H1 (cell line): ENCODE measurements at regions of chr9 and their contacts with region 1.

Region 1: DNA sequence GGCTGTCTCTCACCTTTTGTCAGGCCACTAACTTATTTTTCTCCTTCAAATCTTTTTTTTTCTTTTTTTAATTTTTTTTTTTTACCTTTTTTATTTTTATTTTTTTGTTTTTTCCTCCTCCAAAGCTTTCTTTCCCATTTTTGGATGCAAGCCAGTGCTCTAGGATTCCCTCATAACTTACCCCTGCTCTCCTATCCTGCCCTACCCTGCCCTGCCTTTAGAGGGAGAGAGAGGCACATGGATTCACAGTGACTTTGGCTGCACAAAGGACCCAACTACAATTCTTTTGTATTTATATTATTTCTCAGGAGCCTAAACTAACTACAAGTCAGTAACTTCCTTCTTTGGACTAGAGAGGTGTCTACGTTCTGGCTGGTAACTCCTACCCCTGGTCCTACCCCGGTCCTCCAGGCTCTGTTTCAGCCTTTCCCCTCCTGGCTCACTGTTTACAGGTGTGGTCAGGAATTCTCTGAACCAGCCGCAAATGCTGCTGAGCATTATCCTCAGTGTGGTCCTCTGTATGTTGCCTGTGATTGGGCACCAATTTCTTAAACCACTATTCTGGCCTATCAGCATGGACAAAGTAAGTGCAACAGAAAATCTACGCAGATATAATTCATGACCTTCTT is 8.4 kb upstream of the RUSC2 start:
- DNase-seq: peak in 1 of 2 experiments; percentile 65
- H3K4me3 ChIP-seq: no peak overlapping the region
- H3K27ac ChIP-seq: no peak overlapping the region
- H3K4me1 ChIP-seq: peaks cover 0 to 3% (median 1%) of the 10 kb centered on the region in 4 experiments; a peak in 1 of 7 replicates
- H3K27me3 ChIP-seq: no peaks in the 10 kb centered on the region
- CTCF ChIP-seq: peak; percentile 66 to 82 (median 75)
- EP300 ChIP-seq: no peak
- POLR2A ChIP-seq: no peak
- RAD21 ChIP-seq: peak; percentile 87 to 90

Region 2: DNA sequence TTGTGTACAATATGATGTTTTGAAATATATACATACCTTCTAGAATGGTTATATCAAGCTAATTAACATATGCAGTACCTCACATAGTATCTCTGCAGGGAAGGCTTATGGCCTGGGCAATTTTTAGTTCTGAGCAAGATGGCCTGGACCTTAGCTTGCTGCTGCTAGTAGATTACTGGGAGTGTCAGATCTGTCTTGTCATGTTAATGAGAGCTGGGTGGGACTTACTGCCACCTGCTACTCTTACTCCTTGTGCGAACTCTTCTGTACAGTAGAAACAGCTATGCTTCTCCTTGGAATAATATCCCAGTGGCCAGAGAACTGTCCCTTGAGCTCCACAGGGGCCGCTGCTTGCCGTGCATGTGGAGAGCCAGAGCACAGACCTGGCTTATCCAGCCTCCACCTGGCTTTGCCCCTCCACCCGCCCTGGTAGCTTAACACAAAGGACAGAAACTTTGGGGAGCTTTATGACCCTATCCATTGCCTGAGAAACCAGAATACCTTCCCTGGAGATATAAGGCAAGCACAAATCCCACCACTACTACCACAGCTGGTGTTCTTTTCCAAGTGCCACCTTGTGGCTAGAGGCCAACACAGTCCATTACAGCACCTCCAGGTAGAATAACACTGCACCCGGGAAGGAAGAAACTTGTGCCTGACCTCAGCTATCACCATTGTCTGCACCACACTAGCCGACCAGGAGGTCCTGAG is 65.9 kb before region 1 on chr9:
- CTCF ChIA-PET with region 1: interaction called, 10 read pairs
- POLR2A ChIA-PET with region 1: no interaction called
- DNase-seq: peak in 1 of 2 experiments; percentile 52
- H3K4me3 ChIP-seq: no peak overlapping the region
- H3K27ac ChIP-seq: no peak overlapping the region
- H3K4me1 ChIP-seq: peaks cover 0 to 4% (median 1%) of the 10 kb centered on the region in 4 experiments; a peak in 4 of 7 replicates
- H3K27me3 ChIP-seq: no peaks in the 10 kb centered on the region
- CTCF ChIP-seq: peak; percentile 36 to 70 (median 66)
- EP300 ChIP-seq: no peak
- POLR2A ChIP-seq: no peak
- RAD21 ChIP-seq: peak; percentile 47 to 67

Region 3: GRCh38 chr9:35464141-35465025 is 17.1 kb before region 1 on chr9:
- CTCF ChIA-PET with region 1: interaction called, 11 read pairs
- POLR2A ChIA-PET with region 1: no interaction called
- DNase-seq: no peak
- H3K4me3 ChIP-seq: no peak overlapping the region
- H3K27ac ChIP-seq: no peak overlapping the region
- H3K4me1 ChIP-seq: no peaks in the 10 kb centered on the region
- H3K27me3 ChIP-seq: no peaks in the 10 kb centered on the region
- CTCF ChIP-seq: no peak
- EP300 ChIP-seq: no peak
- POLR2A ChIP-seq: no peak
- RAD21 ChIP-seq: no peak

Region 4: DNA sequence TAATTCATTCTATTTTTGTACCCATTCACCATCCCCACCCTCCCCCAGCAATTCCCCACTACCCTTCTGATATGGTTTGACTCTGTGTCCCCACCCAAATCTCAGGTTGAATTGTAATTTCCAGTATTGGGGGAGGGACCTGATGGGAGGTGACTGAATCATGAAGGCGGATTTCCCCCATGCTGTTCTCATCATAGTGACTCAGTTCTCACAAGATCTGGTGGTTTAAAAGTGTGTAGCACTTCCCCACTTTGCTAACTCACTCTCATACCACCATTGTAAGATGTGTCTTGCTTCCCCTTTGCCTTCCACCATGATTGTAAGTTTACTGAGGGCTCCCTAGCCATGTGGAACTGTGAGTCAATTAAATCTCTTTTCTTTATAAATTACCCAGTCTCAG is 97.7 kb after region 1 on chr9:
- CTCF ChIA-PET with region 1: no interaction called
- POLR2A ChIA-PET with region 1: no interaction called
- DNase-seq: no peak
- H3K4me3 ChIP-seq: no peak overlapping the region
- H3K27ac ChIP-seq: no peak overlapping the region
- H3K4me1 ChIP-seq: 0 out of 7 replicates have a peak, but pooled peaks cover 0 to 3% (median 0%) of the 10 kb centered on the region in 4 experiments
- H3K27me3 ChIP-seq: no peaks in the 10 kb centered on the region
- CTCF ChIP-seq: no peak
- EP300 ChIP-seq: no peak
- POLR2A ChIP-seq: no peak
- RAD21 ChIP-seq: no peak